ENCODE measurements at regions of chr1 and their contacts with region 1.

Region 1: GRCh38 chr1:78676347-78676982 is 26.8 kb downstream of the IFI44 start:
- DNase-seq: no peak
- ATAC-seq: no peak

Region 2: DNA sequence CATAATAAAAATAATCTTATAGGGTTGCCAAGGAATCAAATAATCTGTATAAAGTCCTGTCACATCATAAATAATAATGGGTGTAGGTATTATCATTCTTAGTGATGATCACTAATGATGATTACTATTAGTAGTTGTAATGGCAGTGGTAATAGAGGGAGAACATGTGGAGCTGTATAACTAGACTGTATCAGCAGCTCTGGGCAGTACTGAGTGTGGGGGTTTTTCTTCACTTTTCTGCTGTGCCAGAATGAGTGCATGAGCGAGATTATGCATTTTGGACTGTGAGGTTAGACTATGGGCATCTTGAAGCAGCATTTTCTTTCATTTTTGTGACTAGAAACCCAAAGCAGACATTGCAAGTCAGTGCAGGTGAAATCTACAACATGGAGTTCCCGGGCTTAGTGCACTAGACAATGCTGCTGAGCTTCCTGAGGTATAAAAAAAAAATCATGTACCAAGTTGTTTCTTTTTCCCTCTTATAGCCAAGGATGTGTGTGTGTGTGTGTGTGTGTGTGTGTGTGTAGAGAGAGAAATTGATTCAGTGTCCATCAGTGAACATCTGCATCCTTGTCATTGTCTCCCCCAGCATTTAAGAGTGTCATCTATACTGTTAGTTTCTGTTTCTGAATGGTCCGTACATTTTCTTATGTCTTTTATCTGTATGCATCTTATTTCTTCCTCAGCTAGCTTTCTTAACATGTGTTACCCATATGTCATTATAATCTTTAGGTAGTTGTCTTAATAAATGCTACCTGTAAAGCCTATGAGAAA is 544.1 kb before region 1 on chr1:
- intact Hi-C with region 1: loop called (anchors 5 kb)
- DNase-seq: no peak
- ATAC-seq: no peak

Region 3: GRCh38 chr1:78145105-78145580 is 531.3 kb before region 1 on chr1:
- intact Hi-C with region 1: loop called (anchors 5 kb)
- DNase-seq: no peak
- ATAC-seq: peak; percentile 80

Region 4: GRCh38 chr1:78617615-78618026 is 58.8 kb before region 1 on chr1:
- intact Hi-C with region 1: loop called (anchors 1 kb)
- DNase-seq: peak; percentile 70
- ATAC-seq: peak; percentile 86

Region 5: DNA sequence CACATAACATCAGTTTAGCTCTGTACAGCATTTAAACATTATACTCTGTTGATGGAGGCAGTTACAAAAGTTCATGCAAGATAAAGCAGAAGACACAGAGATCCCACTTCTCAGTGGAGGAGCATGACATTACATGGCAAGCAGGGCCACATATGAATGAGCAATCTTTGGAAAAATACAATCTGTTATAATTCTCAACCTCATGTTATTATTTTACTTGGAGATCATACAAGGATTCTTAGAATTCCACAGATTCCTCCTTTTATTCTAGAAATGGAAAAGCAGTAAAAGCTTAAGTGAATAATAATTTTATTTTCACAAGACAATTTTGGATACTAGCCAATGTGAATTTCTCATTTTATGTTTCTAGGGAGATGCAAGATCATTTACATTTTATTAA is 39.7 kb after region 1 on chr1:
- intact Hi-C with region 1: no loop called
- DNase-seq: no peak
- ATAC-seq: no peak

Region 6: GRCh38 chr1:78779831-78780230 is 103.4 kb after region 1 on chr1:
- intact Hi-C with region 1: no loop called
- DNase-seq: no peak
- ATAC-seq: no peak

Region 7: DNA sequence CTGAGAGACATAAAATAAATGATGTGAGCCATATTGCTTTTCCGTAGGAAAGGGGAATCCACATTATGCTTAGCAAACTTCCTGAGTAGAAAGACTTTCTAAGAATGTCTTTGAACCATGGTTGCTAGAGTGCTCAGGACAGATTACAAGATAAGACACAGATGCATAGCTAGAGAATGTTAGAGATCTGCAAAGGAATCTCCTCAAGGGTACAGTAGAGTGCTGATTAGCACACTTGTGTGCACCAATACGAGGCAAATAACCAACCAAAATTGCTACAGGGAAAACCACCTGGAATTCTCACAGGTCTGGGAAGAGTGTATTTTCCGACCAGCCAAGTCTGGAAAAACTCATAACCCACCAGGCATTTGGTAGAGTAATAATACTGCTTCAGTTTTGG is 567.0 kb after region 1 on chr1:
- intact Hi-C with region 1: no loop called
- DNase-seq: no peak
- ATAC-seq: no peak

Measured in Right ventricle myocardium inferior (tissue), 1 donor.